ENCODE measurements at regions of chr15 and their contacts with region 1.

Region 1: DNA sequence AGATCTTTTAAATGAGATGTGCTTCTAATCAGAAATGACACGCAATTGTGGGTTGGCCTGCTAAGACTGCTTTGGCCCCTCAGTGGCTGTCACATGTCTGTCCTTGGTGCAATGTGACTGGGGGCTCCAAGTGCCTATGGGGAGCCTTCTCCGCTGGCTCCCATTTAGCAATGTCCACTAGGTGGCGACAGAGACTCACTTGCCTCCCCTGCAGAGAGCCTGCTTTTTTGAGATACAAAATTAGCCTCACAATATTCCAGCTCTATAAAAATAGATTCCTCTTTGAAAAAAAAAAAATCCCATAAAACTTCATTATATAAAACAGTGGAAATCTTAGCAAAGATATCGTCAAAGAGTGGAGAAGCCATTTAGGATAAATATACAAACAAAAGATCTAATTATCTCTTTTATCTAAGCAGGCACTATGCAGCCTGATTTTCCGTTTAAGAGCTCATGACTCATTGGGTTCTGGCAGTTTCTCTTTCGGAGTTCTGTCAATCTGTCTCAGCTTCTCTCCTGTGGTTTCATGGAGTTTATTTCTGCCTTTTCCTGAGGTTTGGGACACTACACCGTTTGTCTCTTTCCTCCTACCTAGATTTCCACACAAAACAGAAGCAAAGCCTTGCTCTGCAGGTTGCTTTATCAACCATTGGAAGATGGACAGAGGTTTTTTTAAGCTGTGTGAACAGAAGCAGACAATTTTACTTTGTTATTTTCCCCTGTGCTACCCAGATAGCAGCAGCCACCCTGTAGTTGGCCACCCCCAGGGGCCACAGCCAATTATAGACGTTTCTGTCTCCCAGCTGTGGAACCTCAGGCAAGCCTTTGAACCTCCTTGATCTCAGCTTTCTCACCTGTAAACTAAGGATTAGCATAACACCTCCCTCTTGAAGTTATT is 68.4 kb upstream of the TNFAIP8L3 start:
- DNase-seq: peak; percentile 84
- H3K4me3 ChIP-seq: peak overlapping the region; percentile 6 to 33; a peak in 3 of 4 replicates
- H3K27ac ChIP-seq: peak overlapping the region; percentile 25 to 30; a peak in 2 of 4 replicates
- H3K4me1 ChIP-seq: peaks cover 0 to 6% of the 10 kb centered on the region in 2 experiments; a peak in 2 of 4 replicates
- H3K27me3 ChIP-seq: no peaks in the 10 kb centered on the region; the same call in 1 of the 2 replicates
- CTCF ChIP-seq: peak; percentile 99
- EP300 ChIP-seq: no peak
- RAD21 ChIP-seq: peak; percentile 91

Region 2: DNA sequence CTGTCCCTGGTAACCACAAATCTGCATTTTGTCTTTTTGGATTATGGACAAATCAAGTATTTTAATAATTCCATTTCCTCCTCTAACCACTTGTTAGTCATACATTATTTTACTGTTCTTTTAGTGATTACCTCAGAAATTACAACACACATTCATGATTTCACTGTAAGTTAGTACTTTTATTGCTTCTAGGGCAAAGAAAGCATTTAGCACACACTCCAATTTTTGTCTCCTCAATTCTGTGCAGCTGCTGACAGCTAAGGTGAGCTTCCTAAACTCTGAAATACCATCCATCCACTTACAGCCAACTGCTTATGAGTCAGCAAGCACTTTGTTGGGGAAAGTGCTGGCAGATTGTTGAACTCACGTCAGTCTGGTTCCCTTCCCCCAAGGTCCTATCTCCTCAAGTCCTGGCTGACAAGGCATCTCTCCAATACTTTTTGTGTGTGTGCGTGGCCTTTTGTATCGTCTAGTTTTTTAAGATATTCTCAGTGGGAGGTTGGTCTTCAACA is 19.0 kb before region 1 on chr15:
- CTCF ChIA-PET with region 1: interaction called, 117 read pairs
- POLR2A ChIA-PET with region 1: no interaction called
- DNase-seq: no peak
- H3K4me3 ChIP-seq: no peak overlapping the region
- H3K27ac ChIP-seq: no peak overlapping the region
- H3K4me1 ChIP-seq: 0 out of 4 replicates have a peak, but pooled peaks cover 0 to 4% of the 10 kb centered on the region in 2 experiments
- H3K27me3 ChIP-seq: no peaks in the 10 kb centered on the region; the same call in 1 of the 2 replicates
- CTCF ChIP-seq: no peak
- EP300 ChIP-seq: no peak
- RAD21 ChIP-seq: no peak

Region 3: DNA sequence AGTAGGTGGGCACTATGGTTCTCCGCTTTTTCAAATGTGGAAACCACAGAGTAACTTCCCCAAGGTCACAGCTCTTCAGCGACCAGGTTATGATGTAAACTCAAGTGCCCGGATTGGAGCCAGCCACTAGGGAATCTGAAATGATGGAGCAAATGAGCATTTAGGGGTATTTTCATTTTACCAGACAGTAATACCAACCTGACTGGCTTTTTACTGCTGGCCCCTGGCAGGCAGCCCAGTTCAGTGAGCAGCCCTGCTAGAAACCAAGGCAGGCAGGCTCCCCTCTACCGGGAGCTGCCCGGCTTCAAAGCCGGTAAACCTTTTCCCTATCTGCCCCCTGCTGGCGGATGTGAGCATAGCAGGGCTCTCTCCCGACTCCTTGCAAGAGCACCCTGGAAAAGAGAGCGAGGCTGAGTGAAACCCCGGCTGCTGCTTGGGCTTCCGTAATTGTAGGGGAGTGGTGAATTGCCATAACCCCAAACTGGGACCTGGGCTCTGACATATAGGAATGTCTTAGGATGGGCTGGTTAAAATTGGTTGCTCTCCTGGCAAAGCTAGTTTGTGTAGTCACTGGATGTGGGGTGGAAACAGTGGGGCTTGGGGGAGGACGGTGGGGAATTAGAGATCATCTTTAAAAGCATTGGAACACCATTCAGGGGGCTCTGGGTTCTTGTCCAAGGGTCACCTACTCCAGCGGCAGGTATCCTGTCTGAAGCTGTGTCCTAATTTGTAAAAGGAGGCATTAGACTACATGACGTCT is 29.6 kb after region 1 on chr15:
- CTCF ChIA-PET with region 1: interaction called, 284 read pairs
- POLR2A ChIA-PET with region 1: interaction called, 7 read pairs
- DNase-seq: peak; percentile 76
- H3K4me3 ChIP-seq: no peak overlapping the region
- H3K27ac ChIP-seq: no peak overlapping the region
- H3K4me1 ChIP-seq: peaks cover 0 to 2% of the 10 kb centered on the region in 2 experiments; a peak in 1 of 4 replicates
- H3K27me3 ChIP-seq: peaks cover 21% of the 10 kb centered on the region; the same call in 1 of the 2 replicates
- CTCF ChIP-seq: peak; percentile 93
- EP300 ChIP-seq: no peak
- RAD21 ChIP-seq: peak; percentile 82

Region 4: DNA sequence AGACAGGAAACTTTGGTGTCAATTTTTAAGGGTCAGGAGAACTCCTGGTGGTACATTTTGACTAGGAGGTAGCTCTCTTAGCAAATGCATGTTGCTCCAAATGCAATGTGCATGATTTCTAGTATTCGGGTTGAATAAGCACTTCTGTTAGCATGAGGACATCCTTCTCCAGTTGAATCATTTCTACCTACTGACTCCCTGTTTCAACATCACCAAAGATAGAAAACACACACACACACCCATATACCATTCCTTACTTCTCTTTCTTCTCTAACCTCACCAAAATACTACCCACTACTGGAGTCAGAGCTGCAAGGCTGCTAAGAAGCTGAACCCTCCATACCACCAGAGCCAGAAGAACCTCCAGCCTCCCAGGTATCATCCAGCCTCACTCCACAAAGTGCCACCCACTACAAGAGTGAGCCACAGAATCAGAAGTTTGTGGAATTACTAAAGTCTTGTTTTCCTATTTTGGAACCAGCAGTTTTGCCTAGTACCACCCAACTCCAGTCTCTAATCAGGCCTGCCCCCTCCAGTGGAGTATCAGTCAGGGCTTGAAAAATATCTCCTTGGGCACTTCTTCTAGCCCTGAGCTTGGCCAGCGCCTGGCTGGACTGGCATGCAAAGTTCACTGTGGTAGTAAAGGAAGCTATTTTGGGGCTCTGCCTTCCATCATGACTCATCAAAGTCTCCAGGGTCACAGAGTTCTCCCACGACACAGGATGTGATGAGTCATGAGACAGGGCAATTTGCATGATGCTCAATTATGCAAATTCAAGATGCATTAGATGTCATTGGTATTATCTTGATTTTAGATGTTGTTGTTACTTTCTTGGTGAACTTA is 65.0 kb after region 1 on chr15:
- CTCF ChIA-PET with region 1: interaction called, 52 read pairs
- POLR2A ChIA-PET with region 1: no interaction called
- DNase-seq: no peak
- H3K4me3 ChIP-seq: no peak overlapping the region
- H3K27ac ChIP-seq: peak overlapping the region in 1 of 2 experiments; percentile 56; a peak in 2 of 4 replicates
- H3K4me1 ChIP-seq: peaks cover 3 to 11% of the 10 kb centered on the region in 2 experiments; a peak in 2 of 4 replicates
- H3K27me3 ChIP-seq: no peaks in the 10 kb centered on the region
- CTCF ChIP-seq: no peak
- EP300 ChIP-seq: no peak
- RAD21 ChIP-seq: no peak

Region 5: GRCh38 chr15:51288108-51289065 is 125.3 kb after region 1 on chr15:
- CTCF ChIA-PET with region 1: no interaction called
- POLR2A ChIA-PET with region 1: no interaction called
- DNase-seq: no peak
- H3K4me3 ChIP-seq: no peak overlapping the region
- H3K27ac ChIP-seq: no peak overlapping the region
- H3K4me1 ChIP-seq: no peaks in the 10 kb centered on the region; a peak in 1 of 4 replicates
- H3K27me3 ChIP-seq: peaks cover 7% of the 10 kb centered on the region; the same call in 1 of the 2 replicates
- CTCF ChIP-seq: no peak
- EP300 ChIP-seq: no peak
- RAD21 ChIP-seq: no peak

Region 6: DNA sequence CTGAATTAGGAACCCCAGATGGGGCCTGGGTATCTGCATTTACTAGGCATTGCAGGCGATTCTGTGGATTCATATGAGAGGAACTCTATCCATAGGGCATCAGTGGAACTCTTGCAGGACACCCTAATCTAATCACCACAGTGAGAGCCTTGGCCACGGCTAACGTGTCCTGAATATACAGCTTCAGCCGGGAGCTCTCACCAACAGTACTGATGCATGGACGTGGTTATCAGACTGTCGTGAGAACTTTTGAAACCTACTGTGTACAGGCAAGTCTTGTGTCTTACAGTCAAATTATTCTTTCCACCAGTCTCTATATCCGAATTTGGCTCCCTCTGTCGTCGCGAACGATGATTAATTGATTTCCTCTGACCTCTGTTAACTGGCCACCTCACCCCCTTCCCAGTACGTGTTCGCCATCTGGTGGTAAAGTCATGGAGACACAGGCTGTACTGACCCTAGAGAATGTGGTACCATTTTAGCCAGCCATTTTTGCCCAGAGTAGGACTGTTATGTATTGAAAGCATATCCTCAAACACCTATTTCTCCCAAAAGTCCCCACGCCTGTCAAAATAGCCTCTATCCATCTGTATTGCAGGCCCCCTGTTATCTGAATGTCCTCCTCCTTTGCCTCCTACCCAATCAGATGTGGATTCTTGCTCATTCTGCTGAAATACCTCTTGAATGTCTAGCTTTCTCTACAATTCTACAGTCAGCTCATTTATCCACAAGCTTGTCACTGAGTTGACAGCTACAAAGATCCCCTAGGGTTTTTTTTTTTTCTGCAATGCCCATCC is 218.1 kb after region 1 on chr15:
- CTCF ChIA-PET with region 1: interaction called, 115 read pairs
- POLR2A ChIA-PET with region 1: no interaction called
- DNase-seq: peak; percentile 78
- H3K4me3 ChIP-seq: peak overlapping the region in 1 of 2 experiments; percentile 33; a peak in 1 of 4 replicates
- H3K27ac ChIP-seq: no peak overlapping the region
- H3K4me1 ChIP-seq: peaks cover 0 to 5% of the 10 kb centered on the region in 2 experiments; a peak in 1 of 4 replicates
- H3K27me3 ChIP-seq: no peaks in the 10 kb centered on the region; the same call in 1 of the 2 replicates
- CTCF ChIP-seq: peak; percentile 85
- EP300 ChIP-seq: no peak
- RAD21 ChIP-seq: peak; percentile 99

Region 7: DNA sequence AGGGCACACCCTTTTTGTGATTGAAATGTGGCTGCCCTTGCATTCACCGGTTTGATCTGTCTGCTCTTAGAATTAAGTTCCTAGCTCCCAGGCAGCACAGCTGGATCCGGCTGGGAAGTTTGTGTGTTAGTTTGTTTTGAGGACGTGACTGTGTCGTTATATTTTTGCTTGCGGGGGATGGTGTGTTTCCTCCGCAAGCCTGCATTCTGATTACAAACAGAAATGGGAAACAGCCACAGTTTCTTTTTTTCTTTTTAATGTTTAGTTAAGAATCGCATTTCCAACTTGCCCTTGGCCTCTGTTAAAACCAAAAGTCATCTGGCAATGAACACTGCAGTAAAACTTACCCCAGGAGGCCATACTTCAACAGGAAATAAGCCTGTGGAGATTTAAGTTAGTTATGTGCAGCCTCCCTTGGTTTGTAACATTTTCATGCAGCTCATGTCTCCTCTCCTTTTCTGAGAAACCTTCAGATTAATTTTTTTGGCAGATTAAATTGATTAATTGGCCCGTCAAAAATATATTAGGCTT is 667.2 kb after region 1 on chr15:
- CTCF ChIA-PET with region 1: no interaction called
- POLR2A ChIA-PET with region 1: no interaction called
- DNase-seq: no peak
- H3K4me3 ChIP-seq: peak overlapping the region; percentile 66 to 75
- H3K27ac ChIP-seq: peak overlapping the region; percentile 76 to 79
- H3K4me1 ChIP-seq: peaks cover 7 to 23% of the 10 kb centered on the region in 2 experiments; a peak in 3 of 4 replicates
- H3K27me3 ChIP-seq: no peaks in the 10 kb centered on the region
- CTCF ChIP-seq: no peak
- EP300 ChIP-seq: 0 out of 4 replicates have a peak, but pooled peaks of 1 of the 2 experiments have one; percentile 1
- RAD21 ChIP-seq: no peak

Measured in SK-N-SH (cell line).